WTC11 (cell line): ENCODE measurements at regions of chr1 and their contacts with region 1.

Region 1: GRCh38 chr1:116485071-116485735 is 85.6 kb downstream of the CD58 start:
- DNase-seq: peak; percentile 94
- ATAC-seq: peak; percentile 97
- H3K4me3 Mint-ChIP-seq: no peak overlapping the region
- H3K27ac Mint-ChIP-seq: no peak overlapping the region
- H3K4me1 Mint-ChIP-seq: peaks cover 11% of the 10 kb centered on the region
- H3K27me3 Mint-ChIP-seq: no peaks in the 10 kb centered on the region
- CTCF ChIP-seq: peak; percentile 81

Region 2: DNA sequence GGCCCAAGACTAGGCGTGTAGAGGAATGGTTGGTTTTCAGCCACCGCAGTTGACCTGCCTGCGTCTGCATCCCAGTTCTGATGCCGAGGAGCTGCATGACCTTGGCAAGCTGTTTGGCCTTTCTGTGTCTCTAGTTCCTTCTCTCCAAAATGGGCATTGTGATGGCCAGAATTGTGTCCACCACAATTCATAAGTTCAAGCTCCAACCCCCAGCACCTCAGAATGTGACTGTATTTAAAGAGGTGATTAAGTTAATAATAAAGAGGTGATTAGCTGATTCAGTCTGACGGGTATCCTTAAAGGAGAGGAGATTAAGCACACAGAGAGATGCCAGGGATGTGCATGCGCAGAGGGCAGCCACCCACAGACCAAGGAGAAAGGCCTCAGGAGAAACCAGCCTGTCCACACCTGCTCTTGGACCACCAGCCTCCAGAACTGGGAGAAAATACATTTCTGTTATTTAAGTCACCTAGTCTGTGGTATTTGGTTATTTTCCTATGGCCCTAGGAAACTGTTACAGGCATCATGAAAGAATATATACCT is 345.5 kb before region 1 on chr1:
- CTCF ChIA-PET with region 1: interaction called, 196 read pairs
- POLR2A ChIA-PET with region 1: interaction called, 10 read pairs
- DNase-seq: no peak
- ATAC-seq: no peak
- H3K4me3 Mint-ChIP-seq: no peak overlapping the region
- H3K27ac Mint-ChIP-seq: no peak overlapping the region
- H3K4me1 Mint-ChIP-seq: peaks cover 6% of the 10 kb centered on the region
- H3K27me3 Mint-ChIP-seq: no peaks in the 10 kb centered on the region
- CTCF ChIP-seq: no peak

Region 3: GRCh38 chr1:116372191-116372586 is 113.0 kb before region 1 on chr1:
- CTCF ChIA-PET with region 1: interaction called, 29 read pairs
- POLR2A ChIA-PET with region 1: interaction called, 4 read pairs
- DNase-seq: peak; percentile 18
- ATAC-seq: no peak
- H3K4me3 Mint-ChIP-seq: peak overlapping the region; percentile 84
- H3K27ac Mint-ChIP-seq: peak overlapping the region; percentile 49; the same call in 1 of the 2 replicates
- H3K4me1 Mint-ChIP-seq: peaks cover 41% of the 10 kb centered on the region
- H3K27me3 Mint-ChIP-seq: peaks cover 21% of the 10 kb centered on the region
- CTCF ChIP-seq: no peak

Region 4: GRCh38 chr1:116403496-116404136 is 81.6 kb before region 1 on chr1:
- CTCF ChIA-PET with region 1: interaction called, 34 read pairs
- POLR2A ChIA-PET with region 1: no interaction called
- DNase-seq: no peak
- ATAC-seq: no peak
- H3K4me3 Mint-ChIP-seq: no peak overlapping the region
- H3K27ac Mint-ChIP-seq: no peak overlapping the region
- H3K4me1 Mint-ChIP-seq: no peaks in the 10 kb centered on the region
- H3K27me3 Mint-ChIP-seq: no peaks in the 10 kb centered on the region
- CTCF ChIP-seq: no peak

Region 5: DNA sequence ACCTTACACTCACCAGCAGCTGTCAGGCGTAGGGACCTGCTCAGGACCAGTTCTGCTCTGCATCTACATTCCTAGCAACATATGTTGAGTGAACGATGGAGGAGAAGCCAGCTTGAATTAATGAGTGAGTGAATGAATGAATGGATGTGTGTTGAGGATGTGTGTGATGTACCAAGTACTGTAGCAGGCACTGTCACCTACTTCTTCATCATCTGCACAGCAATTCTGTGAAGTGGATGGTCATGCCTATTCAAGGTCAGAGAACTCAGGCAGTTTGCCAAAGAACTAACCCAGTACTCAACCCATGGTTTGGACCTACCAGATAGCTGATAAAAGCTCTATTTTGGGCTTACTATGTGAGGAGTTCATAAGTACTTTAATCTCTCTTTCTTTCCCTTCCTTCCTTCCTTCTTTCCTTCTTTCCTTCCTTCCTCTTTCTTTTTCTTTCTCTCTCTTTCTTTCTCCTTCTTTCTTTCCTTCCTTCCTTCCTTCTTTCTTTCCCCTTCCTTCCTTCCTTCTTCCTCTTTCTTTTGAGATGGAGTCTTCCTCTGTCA is 55.3 kb before region 1 on chr1:
- CTCF ChIA-PET with region 1: interaction called, 12 read pairs
- POLR2A ChIA-PET with region 1: no interaction called
- DNase-seq: no peak
- ATAC-seq: no peak
- H3K4me3 Mint-ChIP-seq: no peak overlapping the region
- H3K27ac Mint-ChIP-seq: no peak overlapping the region
- H3K4me1 Mint-ChIP-seq: no peaks in the 10 kb centered on the region
- H3K27me3 Mint-ChIP-seq: no peaks in the 10 kb centered on the region
- CTCF ChIP-seq: no peak

Region 6: DNA sequence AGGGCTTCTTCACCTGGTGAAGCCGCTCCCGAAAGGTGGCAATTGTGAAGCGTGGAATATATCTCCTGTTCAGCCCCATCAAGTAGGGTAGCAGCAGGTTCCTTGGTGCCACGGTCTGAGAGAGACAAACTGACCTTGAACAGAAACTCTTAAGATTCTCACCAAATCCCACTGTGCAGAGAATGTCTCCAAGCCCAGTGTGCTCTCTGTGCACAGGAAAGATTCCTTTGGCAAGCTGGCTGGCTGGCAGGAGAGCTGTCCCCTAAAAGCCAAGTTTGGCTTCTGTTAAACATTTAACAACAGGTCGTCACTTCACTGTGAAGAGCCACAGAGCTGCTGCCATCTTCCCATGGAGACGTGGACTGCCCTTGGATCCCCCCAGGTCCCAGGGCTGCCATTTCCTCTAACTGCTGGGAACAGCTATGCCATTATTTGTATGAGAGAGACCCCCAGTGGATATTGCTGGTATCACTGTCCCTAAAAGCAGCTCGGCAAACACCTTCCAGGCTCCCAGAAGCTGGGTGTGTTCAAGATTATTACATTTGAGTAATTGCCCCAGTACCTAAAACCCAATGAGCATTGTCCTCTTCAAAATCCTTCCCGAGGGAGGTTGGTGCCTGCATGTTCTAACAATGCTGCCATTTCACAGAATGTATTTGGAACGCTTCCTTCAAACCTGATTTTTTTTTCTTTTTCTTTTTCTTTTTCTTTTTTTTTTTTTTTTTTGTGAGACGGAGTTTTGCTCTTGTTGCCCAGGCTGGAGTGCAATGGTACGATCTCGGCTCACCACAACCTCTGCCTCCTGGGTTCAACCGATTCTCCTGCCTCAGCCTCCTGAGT is 13.8 kb after region 1 on chr1:
- CTCF ChIA-PET with region 1: interaction called, 122 read pairs
- POLR2A ChIA-PET with region 1: interaction called, 5 read pairs
- DNase-seq: peak; percentile 68
- ATAC-seq: peak; percentile 88
- H3K4me3 Mint-ChIP-seq: no peak overlapping the region
- H3K27ac Mint-ChIP-seq: no peak overlapping the region
- H3K4me1 Mint-ChIP-seq: peaks cover 16% of the 10 kb centered on the region
- H3K27me3 Mint-ChIP-seq: no peaks in the 10 kb centered on the region
- CTCF ChIP-seq: peak; percentile 67

Region 7: DNA sequence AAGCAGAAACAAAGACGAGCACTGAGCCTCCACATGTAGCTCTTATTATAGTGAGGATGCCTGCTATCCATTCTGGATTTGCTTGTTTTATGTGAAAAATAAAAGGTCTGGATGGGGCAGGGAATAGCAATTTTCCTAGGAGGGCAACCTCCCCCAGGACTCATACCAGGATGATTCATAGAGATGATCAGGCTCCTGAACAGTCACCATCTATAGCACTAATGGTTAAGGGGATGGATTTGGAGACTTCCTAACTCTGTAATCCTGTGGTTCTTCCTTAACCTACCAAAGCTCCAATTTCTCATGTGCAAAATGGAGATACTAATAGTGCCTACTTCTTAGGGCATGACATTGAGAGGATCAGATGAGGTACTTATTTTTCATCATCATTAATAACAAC is 120.1 kb after region 1 on chr1:
- CTCF ChIA-PET with region 1: no interaction called
- POLR2A ChIA-PET with region 1: no interaction called
- DNase-seq: no peak
- ATAC-seq: no peak
- H3K4me3 Mint-ChIP-seq: no peak overlapping the region
- H3K27ac Mint-ChIP-seq: no peak overlapping the region
- H3K4me1 Mint-ChIP-seq: peaks cover 33% of the 10 kb centered on the region
- H3K27me3 Mint-ChIP-seq: no peaks in the 10 kb centered on the region
- CTCF ChIP-seq: no peak

Region 8: DNA sequence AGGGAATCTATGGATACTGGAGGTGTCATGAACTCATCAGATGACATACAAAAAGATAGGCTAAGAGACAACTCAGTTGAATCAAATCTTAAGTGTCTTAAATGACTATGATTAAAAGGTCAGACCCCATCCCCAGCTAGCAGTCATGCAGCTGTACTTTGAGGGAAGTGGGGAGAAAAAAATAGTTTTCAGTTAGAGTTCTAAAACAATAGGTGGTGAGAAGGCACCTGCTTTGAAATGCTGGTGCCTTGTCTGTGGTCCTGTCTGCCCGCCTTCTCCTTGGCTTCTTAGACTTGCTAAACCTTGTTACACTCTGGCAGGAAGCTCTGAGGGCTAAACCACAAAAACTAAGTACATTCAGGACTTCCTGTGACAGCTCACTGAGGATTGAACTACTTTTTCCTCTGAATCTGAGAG is 284.4 kb after region 1 on chr1:
- CTCF ChIA-PET with region 1: no interaction called
- POLR2A ChIA-PET with region 1: no interaction called
- DNase-seq: no peak
- ATAC-seq: no peak
- H3K4me3 Mint-ChIP-seq: no peak overlapping the region
- H3K27ac Mint-ChIP-seq: no peak overlapping the region
- H3K4me1 Mint-ChIP-seq: 0 out of 2 replicates have a peak, but pooled peaks cover 3% of the 10 kb centered on the region
- H3K27me3 Mint-ChIP-seq: no peaks in the 10 kb centered on the region
- CTCF ChIP-seq: no peak